K562 (cell line): ENCODE measurements at regions of chr4 and their contacts with region 1.

Region 1: GRCh38 chr4:77385124-77385969 is 220.3 kb upstream of the CXCL13 start:
- DNase-seq: peak; percentile 49 to 64 (median 55)
- ATAC-seq: peak; percentile 85
- H3K4me3 ChIP-seq: no peak overlapping the region
- H3K27ac ChIP-seq: no peak overlapping the region
- H3K4me1 ChIP-seq: no peaks in the 10 kb centered on the region
- H3K27me3 ChIP-seq: no peaks in the 10 kb centered on the region
- CTCF ChIP-seq: peak; percentile 71 to 80 (median 80)
- EP300 ChIP-seq: no peak
- POLR2A ChIP-seq: no peak
- RAD21 ChIP-seq: peak; percentile 39 to 70

Region 2: GRCh38 chr4:77433418-77433733 is 48.0 kb after region 1 on chr4:
- CTCF ChIA-PET with region 1: interaction called, 4 read pairs
- POLR2A ChIA-PET with region 1: no interaction called
- in situ Hi-C with region 1: no loop called
- intact Hi-C with region 1: loop called (anchors 1 kb)
- DNase-seq: peak; percentile 8 to 19 (median 14)
- ATAC-seq: peak; percentile 72
- H3K4me3 ChIP-seq: no peak overlapping the region
- H3K27ac ChIP-seq: no peak overlapping the region
- H3K4me1 ChIP-seq: no peaks in the 10 kb centered on the region
- H3K27me3 ChIP-seq: no peaks in the 10 kb centered on the region; a peak in 1 of 5 replicates
- CTCF ChIP-seq: peak; percentile 42 to 56 (median 48); a peak in 5 of 6 replicates
- EP300 ChIP-seq: no peak
- POLR2A ChIP-seq: no peak
- RAD21 ChIP-seq: peak; percentile 25 to 42; a peak in 3 of 4 replicates

Region 3: DNA sequence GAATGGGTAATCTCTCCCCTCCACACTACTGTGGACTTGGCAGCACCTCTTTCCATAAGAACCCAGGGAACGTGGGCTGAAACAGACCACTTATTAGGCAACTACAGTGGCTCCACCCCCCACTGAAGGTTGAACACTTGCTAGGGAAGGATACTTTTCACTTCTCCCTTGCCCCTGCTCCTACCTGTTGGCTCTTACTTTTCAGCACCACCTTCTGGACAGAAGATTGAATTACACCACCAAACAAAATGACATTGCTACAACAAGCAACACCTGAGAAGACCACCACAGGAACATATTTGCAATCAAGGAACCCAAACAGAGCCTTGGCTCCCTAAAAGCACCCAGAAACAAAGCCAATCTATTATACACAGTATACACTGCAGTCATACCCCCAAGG is 88.2 kb after region 1 on chr4:
- CTCF ChIA-PET with region 1: interaction called, 4 read pairs
- POLR2A ChIA-PET with region 1: no interaction called
- in situ Hi-C with region 1: no loop called
- intact Hi-C with region 1: loop called (anchors 1 kb)
- DNase-seq: peak; percentile 32 to 51 (median 45)
- ATAC-seq: peak; percentile 74
- H3K4me3 ChIP-seq: no peak overlapping the region
- H3K27ac ChIP-seq: no peak overlapping the region
- H3K4me1 ChIP-seq: no peaks in the 10 kb centered on the region
- H3K27me3 ChIP-seq: no peaks in the 10 kb centered on the region
- CTCF ChIP-seq: peak; percentile 57 to 58 (median 58)
- EP300 ChIP-seq: no peak
- POLR2A ChIP-seq: no peak
- RAD21 ChIP-seq: peak in 1 of 2 experiments; percentile 47; a peak in 2 of 4 replicates

Region 4: GRCh38 chr4:77600521-77601451 is 215.4 kb after region 1 on chr4:
- CTCF ChIA-PET with region 1: no interaction called
- POLR2A ChIA-PET with region 1: no interaction called
- in situ Hi-C with region 1: no loop called
- intact Hi-C with region 1: loop called (anchors 5 kb)
- DNase-seq: peak; percentile 42 to 58 (median 53)
- ATAC-seq: peak; percentile 81
- H3K4me3 ChIP-seq: no peak overlapping the region
- H3K27ac ChIP-seq: no peak overlapping the region
- H3K4me1 ChIP-seq: no peaks in the 10 kb centered on the region
- H3K27me3 ChIP-seq: peaks cover 7 to 8% of the 10 kb centered on the region in 2 experiments; a peak in 3 of 5 replicates
- CTCF ChIP-seq: peak; percentile 62 to 76 (median 74)
- EP300 ChIP-seq: no peak
- POLR2A ChIP-seq: no peak
- RAD21 ChIP-seq: peak in 1 of 2 experiments; percentile 43; a peak in 2 of 4 replicates

Region 5: GRCh38 chr4:77618383-77619122 is 233.2 kb after region 1 on chr4:
- CTCF ChIA-PET with region 1: interaction called, 3 read pairs
- POLR2A ChIA-PET with region 1: no interaction called
- in situ Hi-C with region 1: no loop called
- intact Hi-C with region 1: loop called (anchors 1 kb)
- DNase-seq: peak; percentile 61 to 72 (median 64)
- ATAC-seq: peak; percentile 99
- H3K4me3 ChIP-seq: no peak overlapping the region
- H3K27ac ChIP-seq: no peak overlapping the region
- H3K4me1 ChIP-seq: no peaks in the 10 kb centered on the region
- H3K27me3 ChIP-seq: peaks cover 2 to 6% of the 10 kb centered on the region in 2 experiments; a peak in 3 of 5 replicates
- CTCF ChIP-seq: peak; percentile 73 to 84 (median 77)
- EP300 ChIP-seq: no peak
- POLR2A ChIP-seq: no peak
- RAD21 ChIP-seq: peak; percentile 30 to 69

Region 6: DNA sequence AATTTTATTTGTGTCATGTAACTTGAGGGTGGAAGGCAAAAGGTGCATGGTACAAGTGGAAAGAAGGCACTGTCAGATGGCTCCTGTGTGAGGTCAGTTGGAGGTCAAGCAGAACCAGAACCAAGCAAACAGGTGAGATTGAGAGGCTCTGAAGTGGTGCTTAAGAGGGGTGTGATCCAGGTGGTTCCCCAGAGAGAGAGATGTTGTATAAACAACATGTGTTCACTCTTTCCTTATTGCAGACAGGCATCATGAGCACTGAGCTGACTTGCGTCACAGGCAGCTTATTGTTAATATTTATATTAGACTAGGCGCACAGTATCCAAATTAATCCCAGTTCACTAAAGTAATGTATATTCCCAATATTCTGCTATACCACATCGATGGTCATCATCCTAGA is 277.0 kb after region 1 on chr4:
- CTCF ChIA-PET with region 1: no interaction called
- POLR2A ChIA-PET with region 1: no interaction called
- in situ Hi-C with region 1: no loop called
- intact Hi-C with region 1: no loop called
- DNase-seq: no peak
- ATAC-seq: no peak
- H3K4me3 ChIP-seq: no peak overlapping the region
- H3K27ac ChIP-seq: no peak overlapping the region
- H3K4me1 ChIP-seq: no peaks in the 10 kb centered on the region
- H3K27me3 ChIP-seq: peaks cover 5 to 11% of the 10 kb centered on the region in 2 experiments; a peak in 3 of 5 replicates
- CTCF ChIP-seq: no peak
- EP300 ChIP-seq: no peak
- POLR2A ChIP-seq: no peak
- RAD21 ChIP-seq: no peak

Region 7: DNA sequence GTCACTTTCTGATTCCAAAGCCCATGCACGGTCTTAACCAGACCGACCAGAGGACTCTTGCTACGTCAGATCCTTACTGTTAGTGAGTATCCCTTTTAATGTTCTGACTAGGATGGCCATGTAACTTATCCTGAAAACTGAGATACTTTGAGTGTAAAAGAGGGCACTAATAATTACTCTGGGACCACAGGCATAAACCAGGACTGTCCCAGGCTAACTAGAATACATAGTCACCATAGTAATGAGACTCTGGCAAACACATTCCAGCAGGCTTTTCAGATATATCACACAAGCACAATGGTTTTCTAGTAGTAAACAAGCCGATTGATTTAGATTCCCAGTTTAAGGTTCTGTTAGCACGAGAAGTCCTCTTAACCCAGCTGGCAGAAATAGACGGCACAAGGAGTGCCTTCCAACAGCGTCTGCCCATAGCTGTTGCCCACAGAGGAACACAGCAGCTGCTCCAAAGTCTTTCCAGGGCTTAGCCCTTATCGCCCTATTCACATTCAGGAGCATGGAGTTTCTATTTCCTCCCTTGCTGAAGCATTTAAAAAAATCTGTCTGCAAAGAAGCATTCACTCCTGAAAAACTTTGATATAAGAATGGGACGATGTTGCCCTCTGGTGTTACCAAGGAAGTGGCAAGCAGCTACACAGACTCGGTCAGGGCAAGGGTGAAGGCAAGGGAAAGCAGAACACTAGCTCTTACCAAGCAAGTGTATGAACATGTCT is 312.7 kb after region 1 on chr4:
- CTCF ChIA-PET with region 1: no interaction called
- POLR2A ChIA-PET with region 1: no interaction called
- in situ Hi-C with region 1: no loop called
- intact Hi-C with region 1: loop called (anchors 10 kb)
- DNase-seq: peak in 1 of 4 experiments; percentile 9
- ATAC-seq: peak; percentile 65
- H3K4me3 ChIP-seq: no peak overlapping the region
- H3K27ac ChIP-seq: no peak overlapping the region
- H3K4me1 ChIP-seq: no peaks in the 10 kb centered on the region; a peak in 1 of 5 replicates
- H3K27me3 ChIP-seq: no peaks in the 10 kb centered on the region; a peak in 1 of 5 replicates
- CTCF ChIP-seq: peak; percentile 17 to 33 (median 32); a peak in 4 of 6 replicates
- EP300 ChIP-seq: no peak
- POLR2A ChIP-seq: no peak
- RAD21 ChIP-seq: peak in 1 of 2 experiments; percentile 31; a peak in 2 of 4 replicates